ENCODE measurements at regions of chr12 and their contacts with region 1.

Region 1: DNA sequence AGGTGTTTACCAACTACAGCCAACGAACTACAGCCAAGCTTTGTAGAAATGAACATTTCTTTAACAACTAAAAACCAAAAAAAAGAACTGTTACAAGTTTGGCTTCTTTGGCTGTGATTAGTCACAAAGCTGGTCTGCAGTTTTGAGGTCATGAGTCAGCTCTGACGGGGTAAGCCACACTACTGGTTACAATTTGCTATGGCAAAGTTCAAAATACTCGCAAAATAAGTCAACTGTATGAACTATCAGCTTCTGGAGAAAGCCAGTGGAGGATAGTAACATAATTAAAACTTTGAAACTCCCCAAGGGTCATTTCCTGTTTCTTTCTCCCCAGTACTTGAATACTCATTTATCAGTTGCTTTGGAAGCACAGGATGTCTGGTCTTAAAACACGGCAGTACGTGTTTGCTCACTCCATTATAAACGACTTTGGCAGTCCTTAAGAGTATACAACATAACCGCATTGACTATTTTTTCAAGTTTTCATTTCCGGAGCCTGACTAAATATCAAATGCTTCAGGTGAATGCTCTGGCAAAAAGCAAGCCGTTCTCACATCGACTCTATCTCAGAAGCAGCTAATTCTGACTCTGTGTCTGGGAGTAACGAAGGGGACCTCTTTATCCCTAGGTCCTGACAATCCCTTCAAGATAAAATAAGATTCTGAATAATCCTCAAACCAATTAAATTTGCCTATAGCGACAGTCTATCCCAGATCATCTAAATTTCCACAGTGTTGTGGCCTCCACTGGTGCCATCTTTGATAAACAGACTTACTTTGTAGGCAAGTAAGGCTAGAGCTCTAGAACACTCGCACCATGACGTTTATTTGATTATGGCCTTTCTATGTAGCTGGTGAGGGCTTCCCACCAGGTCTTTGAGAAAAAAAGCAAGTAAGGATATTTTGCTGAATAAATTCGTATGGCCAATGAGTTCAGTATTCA is 10.6 kb downstream of the PHLDA1 start:
- DNase-seq: peak; percentile 90
- H3K4me3 Mint-ChIP-seq: peak overlapping the region; percentile 68
- H3K27ac Mint-ChIP-seq: peak overlapping the region; percentile 99
- H3K4me1 Mint-ChIP-seq: peaks cover 60% of the 10 kb centered on the region
- H3K27me3 Mint-ChIP-seq: no peaks in the 10 kb centered on the region

Region 2: DNA sequence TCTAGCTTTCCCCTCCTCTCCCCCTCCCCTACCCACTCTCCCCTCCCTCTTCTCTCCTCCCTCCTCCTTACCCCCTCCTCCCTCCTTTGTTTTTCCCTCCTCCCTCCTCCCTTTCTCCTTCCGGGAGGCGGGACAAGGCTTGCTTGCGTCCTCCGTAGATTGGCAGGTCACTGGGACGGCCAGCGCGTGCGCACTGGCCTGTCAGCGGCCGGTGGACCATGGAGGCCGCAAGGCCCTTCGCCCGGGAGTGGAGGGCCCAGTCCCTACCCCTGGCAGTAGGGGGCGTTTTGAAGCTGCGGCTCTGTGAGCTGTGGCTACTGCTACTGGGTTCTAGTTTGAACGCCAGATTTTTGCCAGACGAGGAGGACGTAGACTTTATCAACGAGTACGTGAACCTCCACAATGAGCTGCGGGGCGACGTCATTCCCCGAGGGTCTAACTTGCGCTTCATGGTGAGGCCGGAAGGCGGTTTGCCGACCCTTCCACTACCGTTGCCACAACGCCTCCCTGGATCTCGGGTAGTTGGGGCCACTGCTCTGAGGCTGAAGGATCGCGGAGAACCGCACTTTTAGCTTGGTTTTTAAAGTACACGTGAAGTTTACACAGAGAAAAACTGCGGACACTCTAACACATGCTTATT is 630.0 kb before region 1 on chr12 and contains the start of gene GLIPR1L2:
- CTCF ChIA-PET with region 1: no interaction called
- POLR2A ChIA-PET with region 1: no interaction called
- intact Hi-C with region 1: loop called (anchors 2 kb)
- DNase-seq: peak; percentile 95
- H3K4me3 Mint-ChIP-seq: peak within 1 kb of the TSS; percentile 86
- H3K27ac Mint-ChIP-seq: peak within 1 kb of the TSS; percentile 93
- H3K4me1 Mint-ChIP-seq: peaks cover 40% of the 10 kb centered on the region
- H3K27me3 Mint-ChIP-seq: no peaks in the 10 kb centered on the region
- total RNA-seq, gene GLIPR1L2: 0.17 to 0.24 TPM

Region 3: DNA sequence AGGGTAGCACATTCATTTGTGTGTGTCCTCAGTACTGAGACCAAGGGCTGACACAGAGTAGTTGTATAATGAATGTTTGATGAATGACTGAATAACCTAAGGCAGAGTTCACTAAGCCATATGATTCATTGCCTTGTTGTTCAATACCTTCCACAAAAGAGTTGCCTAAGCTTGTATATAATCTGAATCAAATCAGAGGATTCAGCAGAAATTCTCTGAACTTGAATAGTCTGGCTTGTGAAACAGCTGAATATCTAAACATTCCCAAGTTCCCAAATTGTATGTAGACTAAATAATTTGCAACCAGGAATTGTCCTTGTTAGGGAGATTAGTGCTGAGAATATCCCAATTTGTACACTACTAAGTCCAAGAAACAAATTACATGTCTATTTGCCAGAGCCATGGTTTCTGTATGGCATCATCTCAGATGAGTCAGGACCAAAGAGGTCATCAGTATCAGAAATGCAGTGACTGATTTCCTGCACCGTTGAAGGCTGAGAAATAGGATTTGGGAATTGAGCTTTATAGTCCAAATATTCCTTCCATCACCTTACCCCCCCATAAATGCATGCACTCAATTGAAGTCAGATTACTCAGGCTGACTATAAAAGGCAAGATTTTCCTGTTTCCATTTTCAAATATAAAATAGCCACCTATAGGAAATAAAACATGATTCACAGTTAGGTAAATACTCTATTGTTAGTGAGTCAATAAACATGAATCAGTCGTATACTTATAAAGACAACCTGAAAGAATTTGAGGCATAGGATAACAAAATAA is 158.1 kb before region 1 on chr12:
- CTCF ChIA-PET with region 1: no interaction called
- POLR2A ChIA-PET with region 1: no interaction called
- intact Hi-C with region 1: loop called (anchors 5 kb)
- DNase-seq: no peak
- H3K4me3 Mint-ChIP-seq: no peak overlapping the region
- H3K27ac Mint-ChIP-seq: no peak overlapping the region
- H3K4me1 Mint-ChIP-seq: peaks cover 7% of the 10 kb centered on the region
- H3K27me3 Mint-ChIP-seq: no peaks in the 10 kb centered on the region

Region 4: DNA sequence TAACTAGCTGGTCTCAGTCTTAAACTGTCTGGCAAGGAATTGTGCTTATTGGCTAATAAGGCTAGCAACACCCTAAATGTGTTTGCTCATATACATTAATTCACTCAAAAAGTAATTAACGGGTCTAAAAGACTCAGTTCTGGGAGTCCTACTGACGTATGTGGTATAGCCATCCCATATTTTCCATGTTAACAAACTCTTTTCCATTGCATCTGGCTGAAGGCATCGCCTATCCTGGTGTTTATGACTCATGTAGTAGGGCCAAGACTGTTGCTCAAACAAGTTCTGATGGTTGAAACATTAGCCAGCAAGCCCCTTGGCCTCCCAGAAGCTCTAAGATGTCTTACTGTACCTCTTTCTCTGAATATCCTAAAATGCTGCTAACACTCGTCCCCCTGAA is 87.9 kb before region 1 on chr12:
- CTCF ChIA-PET with region 1: no interaction called
- POLR2A ChIA-PET with region 1: interaction called, 19 read pairs
- intact Hi-C with region 1: loop called (anchors 1 kb)
- DNase-seq: no peak
- H3K4me3 Mint-ChIP-seq: no peak overlapping the region
- H3K27ac Mint-ChIP-seq: no peak overlapping the region
- H3K4me1 Mint-ChIP-seq: peaks cover 20% of the 10 kb centered on the region
- H3K27me3 Mint-ChIP-seq: no peaks in the 10 kb centered on the region

Region 5: DNA sequence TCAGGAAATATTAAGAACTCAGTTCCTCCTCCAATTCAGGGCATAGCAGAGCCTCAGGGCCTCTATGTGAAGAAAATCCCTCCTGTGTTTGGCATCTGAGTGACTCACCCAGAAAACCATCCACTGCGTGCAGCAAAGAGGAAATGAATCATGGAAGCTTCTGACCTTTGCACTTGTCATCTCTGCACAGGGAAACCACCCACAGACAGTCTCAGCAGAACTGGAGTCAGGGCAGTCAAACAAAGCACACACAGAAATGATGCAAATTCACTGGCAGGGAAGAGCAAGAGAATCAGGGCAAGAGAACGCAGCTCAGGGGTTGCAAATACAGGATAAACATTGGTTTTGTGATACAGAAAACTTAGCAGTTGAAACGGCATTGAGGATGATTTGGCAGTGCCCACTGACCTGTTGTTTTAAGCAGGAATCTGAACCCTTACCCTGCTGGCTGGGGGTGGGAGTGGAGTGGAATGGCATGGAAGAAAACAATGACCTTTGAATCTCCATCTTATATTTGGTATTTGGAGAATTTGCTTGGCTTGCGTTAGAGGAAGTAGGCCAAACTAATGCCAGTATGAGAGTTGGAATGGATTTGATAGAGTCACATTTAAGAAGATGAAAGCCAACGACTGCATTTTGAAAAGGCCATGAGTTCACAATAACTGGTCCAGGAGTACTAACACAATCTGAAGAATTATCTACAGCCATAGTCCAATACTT is 42.9 kb before region 1 on chr12:
- CTCF ChIA-PET with region 1: interaction called, 21 read pairs
- POLR2A ChIA-PET with region 1: interaction called, 44 read pairs
- intact Hi-C with region 1: loop called (anchors 1 kb)
- DNase-seq: peak; percentile 88
- H3K4me3 Mint-ChIP-seq: peak overlapping the region; percentile 34
- H3K27ac Mint-ChIP-seq: peak overlapping the region; percentile 97
- H3K4me1 Mint-ChIP-seq: peaks cover 63% of the 10 kb centered on the region
- H3K27me3 Mint-ChIP-seq: no peaks in the 10 kb centered on the region

Region 6: GRCh38 chr12:76259660-76260389 is 238.8 kb after region 1 on chr12:
- CTCF ChIA-PET with region 1: no interaction called
- POLR2A ChIA-PET with region 1: no interaction called
- intact Hi-C with region 1: no loop called
- DNase-seq: no peak
- H3K4me3 Mint-ChIP-seq: no peak overlapping the region
- H3K27ac Mint-ChIP-seq: no peak overlapping the region
- H3K4me1 Mint-ChIP-seq: no peaks in the 10 kb centered on the region
- H3K27me3 Mint-ChIP-seq: peaks cover 15% of the 10 kb centered on the region

Region 7: GRCh38 chr12:76559400-76560085 is 538.5 kb after region 1 on chr12 and contains the start of gene OSBPL8:
- CTCF ChIA-PET with region 1: no interaction called
- POLR2A ChIA-PET with region 1: no interaction called
- intact Hi-C with region 1: loop called (anchors 2 kb)
- DNase-seq: peak; percentile 98
- H3K4me3 Mint-ChIP-seq: peak within 1 kb of the TSS; percentile 88
- H3K27ac Mint-ChIP-seq: peak within 1 kb of the TSS; percentile 97
- H3K4me1 Mint-ChIP-seq: peaks cover 34% of the 10 kb centered on the region
- H3K27me3 Mint-ChIP-seq: no peaks in the 10 kb centered on the region
- total RNA-seq, gene OSBPL8: 69.8 to 73.7 TPM